Activated CD8-positive, alpha-beta T cell treated with anti-CD3 and anti-CD28 coated beads, Interleukin-2, amount 10 ng/mL, durations not matched to agents 7 days and 5 days (primary cell): ENCODE measurements at regions of chr14 and their contacts with region 1.

Region 1: DNA sequence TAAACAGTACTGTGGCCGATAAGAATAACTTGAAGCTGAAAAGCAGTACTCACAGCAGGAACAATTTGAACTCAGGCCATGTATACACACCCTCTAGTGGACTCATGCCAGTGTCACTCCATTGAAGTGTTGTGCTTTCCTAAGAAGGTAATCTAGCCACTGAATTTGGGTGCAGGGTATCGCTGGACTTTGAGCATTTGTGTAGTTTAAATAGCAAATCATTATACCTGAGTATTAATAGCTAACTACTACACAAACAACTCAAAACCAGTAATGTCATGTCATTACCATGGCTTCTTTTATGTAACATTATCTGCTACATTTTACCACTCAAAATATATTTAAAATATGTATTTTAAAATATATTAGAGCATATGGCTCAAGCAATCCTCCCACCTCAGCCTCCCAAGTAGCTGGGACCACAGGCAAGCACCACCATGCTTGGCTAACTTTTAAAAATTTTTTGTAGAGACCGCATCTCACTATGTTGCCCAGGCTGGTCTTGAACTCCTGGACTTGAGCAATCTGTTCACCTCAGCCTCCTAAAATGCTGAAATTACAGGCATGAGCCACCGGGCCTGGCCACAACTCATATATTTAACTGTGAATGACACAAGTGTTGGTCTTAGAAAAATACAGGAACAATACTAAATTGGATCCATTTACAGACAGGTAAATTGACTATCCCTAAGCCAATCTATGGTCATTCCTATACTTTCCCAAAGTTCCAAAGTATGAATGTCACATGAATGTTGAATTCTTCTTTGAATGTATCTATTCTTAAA is 25.6 kb upstream of the ARID4A start:
- DNase-seq: no peak
- ATAC-seq: no peak
- H3K4me3 Mint-ChIP-seq: no peak overlapping the region
- H3K27ac Mint-ChIP-seq: no peak overlapping the region
- H3K4me1 Mint-ChIP-seq: peaks cover 28% of the 10 kb centered on the region
- H3K27me3 Mint-ChIP-seq: no peaks in the 10 kb centered on the region

Region 2: DNA sequence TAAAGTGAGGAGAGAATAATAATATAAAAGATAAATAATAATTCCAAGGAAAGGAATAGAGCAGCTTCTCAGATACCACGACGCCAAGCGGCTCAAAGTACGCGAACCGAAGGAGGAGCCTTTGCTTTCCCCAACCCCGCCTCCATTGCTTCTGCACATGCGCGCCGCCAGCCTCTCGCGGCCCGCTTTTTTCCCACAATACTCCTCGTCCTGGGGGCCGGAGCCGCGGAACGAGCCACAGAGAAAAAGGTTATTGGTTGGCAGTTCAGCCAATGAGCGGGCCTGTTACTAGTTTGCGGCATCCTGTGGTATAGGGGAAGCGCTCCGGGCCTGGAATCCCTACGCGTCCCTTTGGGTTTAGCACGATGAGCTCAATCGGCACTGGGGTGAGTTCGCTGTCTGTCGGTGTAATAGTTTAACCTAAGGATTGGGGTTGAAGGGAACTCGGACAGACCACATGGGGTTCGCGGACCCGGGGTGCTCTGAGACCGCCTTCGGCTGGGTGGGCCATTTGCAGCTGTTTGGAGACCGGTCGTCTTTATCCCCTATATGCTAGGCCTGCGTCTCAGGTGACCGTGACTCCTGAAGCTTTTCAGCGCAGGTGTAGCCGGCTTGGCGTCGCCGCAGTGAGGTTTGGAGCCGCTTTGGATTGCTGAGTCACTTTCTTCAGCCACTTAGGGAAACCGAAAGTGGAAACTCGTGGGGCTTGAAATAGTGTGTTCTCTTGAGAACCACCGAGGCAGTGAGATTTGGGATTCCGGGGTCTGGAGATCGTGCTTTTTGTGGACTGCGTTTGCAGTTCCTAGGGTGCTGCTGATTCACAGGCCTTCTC is 28.0 kb before region 1 on chr14 and contains the start of gene PSMA3:
- CTCF ChIA-PET with region 1: interaction called, 3 read pairs
- POLR2A ChIA-PET with region 1: interaction called, 21 read pairs
- DNase-seq: peak; percentile 98
- ATAC-seq: peak; percentile 94
- H3K4me3 Mint-ChIP-seq: peak within 1 kb of the TSS; percentile 92
- H3K27ac Mint-ChIP-seq: peak within 1 kb of the TSS; percentile 99
- H3K4me1 Mint-ChIP-seq: peaks cover 41% of the 10 kb centered on the region
- H3K27me3 Mint-ChIP-seq: no peaks in the 10 kb centered on the region
- total RNA-seq, gene PSMA3: 257 to 275 TPM